ENCODE measurements at regions of chr6 and their contacts with region 1.

Region 1: GRCh38 chr6:27539521-27539920 is 66.6 kb upstream of the ZNF184 start:
- DNase-seq: no peak
- H3K4me3 ChIP-seq: no peak overlapping the region
- H3K27me3 ChIP-seq: no peaks in the 10 kb centered on the region; the same call in 1 of the 2 replicates
- CTCF ChIP-seq: no peak

Region 2: GRCh38 chr6:27553123-27553904 is 13.8 kb after region 1 on chr6:
- CTCF ChIA-PET with region 1: no interaction called
- POLR2A ChIA-PET with region 1: interaction called, 13 read pairs
- DNase-seq: no peak
- H3K4me3 ChIP-seq: no peak overlapping the region
- H3K27me3 ChIP-seq: peaks cover 8% of the 10 kb centered on the region
- CTCF ChIP-seq: no peak

Measured in BJ (cell line).